Activated T-helper 1 cell treated with anti-CD3 and anti-CD28 coated beads, Interleukin-12 subunit alpha, Interleukin-12 subunit beta, Interleukin-2, Interleukin-4 antibody, amounts not matched to agents 30 ng/mL and 10 ng/mL and 1 ng/mL, durations not matched to agents 14 hours and 24 hours and 36 hours (primary cell): ENCODE measurements at regions of chr5 and their contacts with region 1.

Region 1: GRCh38 chr5:66653325-66653724 is 57.1 kb downstream of the MAST4 start:
- DNase-seq: no peak
- H3K4me3 Mint-ChIP-seq: no peak overlapping the region
- H3K27ac Mint-ChIP-seq: no peak overlapping the region
- H3K4me1 Mint-ChIP-seq: no peaks in the 10 kb centered on the region
- H3K27me3 Mint-ChIP-seq: peaks cover 12% of the 10 kb centered on the region

Region 2: GRCh38 chr5:66546541-66546940 is 106.8 kb before region 1 on chr5:
- intact Hi-C with region 1: loop called (anchors 5 kb)
- DNase-seq: no peak
- H3K4me3 Mint-ChIP-seq: no peak overlapping the region
- H3K27ac Mint-ChIP-seq: no peak overlapping the region
- H3K4me1 Mint-ChIP-seq: no peaks in the 10 kb centered on the region
- H3K27me3 Mint-ChIP-seq: peaks cover 16% of the 10 kb centered on the region

Region 3: DNA sequence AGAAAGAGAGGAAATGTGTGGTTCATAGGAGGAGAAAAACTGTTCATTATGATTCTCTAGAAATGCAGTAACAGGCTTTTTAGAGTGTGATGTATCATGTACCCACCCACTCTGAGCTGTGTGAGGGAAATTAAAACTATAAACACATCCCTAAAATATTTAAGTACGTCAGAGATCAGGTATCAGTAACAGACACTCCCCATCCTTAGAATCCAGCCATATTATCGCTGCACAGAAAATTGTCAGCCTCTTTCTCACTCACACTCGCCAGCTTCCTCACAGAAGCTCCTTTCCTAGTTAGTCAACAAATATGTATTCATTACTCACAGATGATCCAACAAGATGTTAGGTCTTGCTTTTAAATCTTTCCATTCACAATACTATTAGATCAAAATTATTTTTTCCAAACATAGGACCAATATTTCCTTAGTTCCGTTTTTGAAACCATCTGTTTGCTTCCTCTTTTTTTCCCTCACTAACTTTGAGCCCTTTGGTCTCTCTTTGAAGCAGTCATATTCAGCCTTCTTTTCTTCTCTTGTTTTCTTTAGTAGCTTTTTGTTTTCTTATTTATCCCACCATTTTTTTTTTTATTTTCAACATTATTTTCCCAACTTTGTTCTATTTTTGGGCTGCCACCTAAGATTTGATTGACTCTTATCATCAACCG is 70.7 kb before region 1 on chr5:
- intact Hi-C with region 1: no loop called
- DNase-seq: no peak
- H3K4me3 Mint-ChIP-seq: no peak overlapping the region
- H3K27ac Mint-ChIP-seq: no peak overlapping the region
- H3K4me1 Mint-ChIP-seq: no peaks in the 10 kb centered on the region
- H3K27me3 Mint-ChIP-seq: peaks cover 37% of the 10 kb centered on the region

Region 4: DNA sequence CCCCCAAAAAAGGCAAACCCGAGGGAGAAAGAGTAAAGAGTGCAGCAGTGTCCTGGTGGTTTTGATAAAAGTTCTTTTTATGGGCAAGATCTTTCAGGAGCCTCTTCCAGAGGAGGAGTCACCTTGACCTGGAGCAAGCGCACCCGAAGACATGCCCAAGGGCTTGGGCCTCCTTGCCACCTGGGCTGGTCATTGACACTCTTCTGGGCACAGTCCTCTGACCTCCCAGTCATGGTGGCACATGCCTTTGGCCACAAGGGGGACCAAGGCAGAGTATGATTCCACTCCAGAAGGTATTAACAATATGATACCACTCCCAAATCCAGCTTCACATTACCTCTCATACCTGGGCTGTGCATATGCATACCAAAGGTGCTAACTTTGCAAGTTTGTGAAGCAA is 27.4 kb after region 1 on chr5:
- intact Hi-C with region 1: no loop called
- DNase-seq: no peak
- H3K4me3 Mint-ChIP-seq: no peak overlapping the region
- H3K27ac Mint-ChIP-seq: no peak overlapping the region
- H3K4me1 Mint-ChIP-seq: no peaks in the 10 kb centered on the region
- H3K27me3 Mint-ChIP-seq: peaks cover 18% of the 10 kb centered on the region